ENCODE measurements at regions of chr5 and their contacts with region 1.

Region 1: DNA sequence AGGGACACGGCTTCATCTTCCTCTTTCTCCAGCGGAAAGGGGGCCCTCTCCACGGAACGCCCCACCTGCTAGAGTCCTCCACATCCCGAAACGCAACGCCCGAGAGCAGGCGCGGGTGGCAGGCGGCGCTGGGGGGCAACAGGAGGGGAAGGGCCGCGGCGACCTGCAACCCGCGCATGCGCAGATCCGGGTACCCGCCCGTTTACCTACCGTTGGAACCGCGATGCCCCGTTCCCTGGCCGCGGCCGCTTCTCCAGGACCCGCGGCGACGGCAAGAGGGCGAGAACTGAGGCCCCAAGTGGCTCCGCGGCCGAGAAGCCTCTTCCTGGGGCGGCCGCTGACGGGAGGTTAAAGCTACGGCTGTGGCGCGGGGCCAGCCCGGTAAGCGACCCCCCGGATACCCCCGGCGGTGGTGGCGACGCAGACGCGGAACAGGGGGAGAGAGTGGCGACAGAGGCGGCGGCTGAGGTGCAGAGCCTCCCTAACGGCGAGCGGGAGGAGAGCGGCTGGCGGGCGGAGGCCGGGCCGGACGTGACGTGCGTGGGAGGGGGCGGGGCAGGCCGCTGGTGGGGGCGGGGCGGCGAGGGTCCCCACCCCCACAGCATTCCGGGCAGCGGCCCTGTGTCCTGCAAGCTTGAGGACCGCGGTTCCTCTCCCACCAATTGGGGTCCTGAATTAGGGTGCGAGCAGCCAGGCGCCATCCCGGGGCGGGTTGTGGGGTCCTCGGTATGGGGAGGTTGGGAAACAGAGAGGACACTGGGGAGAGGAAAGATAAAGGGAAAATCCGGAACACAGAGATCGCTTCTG is at the start of gene FAM13B:
- DNase-seq: peak; percentile 75 to 80
- H3K4me3 ChIP-seq: peak within 1 kb of the TSS; percentile 97 to 99 (median 98)
- H3K27ac ChIP-seq: peak within 1 kb of the TSS; percentile 98 to 100 (median 100)
- H3K4me1 ChIP-seq: peaks cover 22 to 43% of the 10 kb centered on the region in 2 donors
- H3K27me3 ChIP-seq: no peaks in the 10 kb centered on the region
- CTCF ChIP-seq: peak in 2 of 6 experiments; percentile 3 to 12
- POLR2A ChIP-seq: peak; percentile 32 to 78
- total RNA-seq, gene FAM13B: 40.1 to 72.0 (median 49.5) TPM

Region 2: GRCh38 chr5:137754126-137754960 is 278.4 kb before region 1 on chr5 and contains the start of gene HNRNPA0:
- intact Hi-C with region 1: loop called (anchors 5 kb)
- DNase-seq: peak; percentile 96 to 97
- H3K4me3 ChIP-seq: peak within 1 kb of the TSS; percentile 49 to 92 (median 89)
- H3K27ac ChIP-seq: peak within 1 kb of the TSS; percentile 100
- H3K4me1 ChIP-seq: peaks cover 5 to 18% of the 10 kb centered on the region in 2 donors
- H3K27me3 ChIP-seq: no peaks in the 10 kb centered on the region
- CTCF ChIP-seq: peak in 1 of 6 experiments; percentile 26
- POLR2A ChIP-seq: peak; percentile 96 to 99
- total RNA-seq, gene HNRNPA0: 10.6 to 14.1 (median 12.4) TPM

Region 3: GRCh38 chr5:137833463-137833862 is 199.3 kb before region 1 on chr5:
- intact Hi-C with region 1: no loop called
- DNase-seq: peak in 1 of 2 donors; percentile 1
- H3K4me3 ChIP-seq: no peak overlapping the region
- H3K27ac ChIP-seq: no peak overlapping the region
- H3K4me1 ChIP-seq: no peaks in the 10 kb centered on the region
- H3K27me3 ChIP-seq: no peaks in the 10 kb centered on the region
- CTCF ChIP-seq: no peak
- POLR2A ChIP-seq: no peak

Region 4: GRCh38 chr5:138083702-138084101 is 50.9 kb after region 1 on chr5 and contains the start of gene WNT8A:
- intact Hi-C with region 1: no loop called
- DNase-seq: no peak
- H3K4me3 ChIP-seq: no peak within 1 kb of the TSS
- H3K27ac ChIP-seq: no peak within 1 kb of the TSS
- H3K4me1 ChIP-seq: no peaks in the 10 kb centered on the region
- H3K27me3 ChIP-seq: no peaks in the 10 kb centered on the region
- CTCF ChIP-seq: no peak
- POLR2A ChIP-seq: no peak
- total RNA-seq, gene WNT8A: not detected